Activated T-helper 2 cell treated with anti-CD3 and anti-CD28 coated beads, Interferon-gamma antibody, Interleukin-2, Interleukin-4, amounts not matched to agents 10 μg/mL and 5 μg/mL and 100 μg/mL, durations not matched to agents 14 hours and 24 hours and 36 hours (primary cell): ENCODE measurements at regions of chr16 and their contacts with region 1.

Region 1: GRCh38 chr16:25051406-25052150 is 36.4 kb upstream of the ARHGAP17 start:
- DNase-seq: no peak
- H3K4me3 Mint-ChIP-seq: peak overlapping the region; percentile 34
- H3K27ac Mint-ChIP-seq: peak overlapping the region; percentile 82
- H3K4me1 Mint-ChIP-seq: peaks cover 50% of the 10 kb centered on the region
- H3K27me3 Mint-ChIP-seq: no peaks in the 10 kb centered on the region

Region 2: GRCh38 chr16:25014500-25015147 is 37.0 kb before region 1 on chr16:
- intact Hi-C with region 1: loop called (anchors 2 kb)
- DNase-seq: no peak
- H3K4me3 Mint-ChIP-seq: peak overlapping the region; percentile 93
- H3K27ac Mint-ChIP-seq: peak overlapping the region; percentile 90
- H3K4me1 Mint-ChIP-seq: peaks cover 65% of the 10 kb centered on the region
- H3K27me3 Mint-ChIP-seq: no peaks in the 10 kb centered on the region

Region 3: GRCh38 chr16:25031441-25032307 is 19.9 kb before region 1 on chr16:
- intact Hi-C with region 1: loop called (anchors 1 kb)
- DNase-seq: peak; percentile 89
- H3K4me3 Mint-ChIP-seq: peak overlapping the region; percentile 92
- H3K27ac Mint-ChIP-seq: peak overlapping the region; percentile 99
- H3K4me1 Mint-ChIP-seq: peaks cover 30% of the 10 kb centered on the region
- H3K27me3 Mint-ChIP-seq: no peaks in the 10 kb centered on the region

Region 4: DNA sequence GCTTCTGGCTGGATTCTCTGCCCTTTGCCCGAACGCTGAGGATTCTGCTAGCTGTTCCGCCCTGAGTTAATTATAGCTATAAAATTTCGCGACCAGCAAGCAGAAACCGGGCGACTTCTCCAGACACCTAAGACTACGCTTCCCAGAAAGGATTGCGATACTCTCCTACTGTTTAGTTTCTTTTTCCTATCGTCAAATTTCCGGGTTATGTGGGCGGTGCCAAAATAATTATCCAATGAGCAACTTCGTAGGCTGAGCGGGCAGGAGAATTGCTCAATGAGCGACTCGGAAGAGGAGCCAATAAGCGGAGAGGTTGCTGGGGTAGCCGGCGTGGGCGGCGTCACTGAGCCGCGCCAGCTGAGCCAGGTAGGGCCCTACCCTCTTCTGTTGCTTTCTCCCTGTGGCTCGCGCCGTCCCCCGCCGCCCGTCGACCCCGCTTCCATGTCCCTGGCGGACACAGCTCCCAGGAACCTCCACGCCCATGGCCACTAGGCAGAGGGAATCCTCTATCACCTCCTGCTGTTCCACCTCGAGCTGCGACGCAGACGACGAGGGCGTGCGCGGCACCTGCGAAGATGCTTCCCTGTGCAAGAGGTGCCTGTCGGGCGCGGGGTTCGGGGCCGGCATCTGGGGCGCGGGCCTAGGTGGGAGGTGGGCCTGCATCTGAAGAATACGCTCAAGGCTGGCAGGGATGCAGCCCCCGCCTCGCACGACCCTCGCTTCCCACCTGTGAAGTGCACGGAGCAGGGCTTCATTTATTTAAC is 60.0 kb after region 1 on chr16 and contains the start of gene LCMT1:
- intact Hi-C with region 1: loop called (anchors 1 kb)
- DNase-seq: peak; percentile 91
- H3K4me3 Mint-ChIP-seq: peak within 1 kb of the TSS; percentile 95
- H3K27ac Mint-ChIP-seq: peak within 1 kb of the TSS; percentile 98
- H3K4me1 Mint-ChIP-seq: peaks cover 45% of the 10 kb centered on the region
- H3K27me3 Mint-ChIP-seq: no peaks in the 10 kb centered on the region
- total RNA-seq, gene LCMT1: 34.1 and 38.6 TPM in 2 replicates

Region 5: GRCh38 chr16:25126820-25127232 is 75.2 kb after region 1 on chr16:
- intact Hi-C with region 1: loop called (anchors 1 kb)
- DNase-seq: no peak
- H3K4me3 Mint-ChIP-seq: no peak overlapping the region
- H3K27ac Mint-ChIP-seq: peak overlapping the region; percentile 30
- H3K4me1 Mint-ChIP-seq: peaks cover 24% of the 10 kb centered on the region
- H3K27me3 Mint-ChIP-seq: no peaks in the 10 kb centered on the region

Region 6: DNA sequence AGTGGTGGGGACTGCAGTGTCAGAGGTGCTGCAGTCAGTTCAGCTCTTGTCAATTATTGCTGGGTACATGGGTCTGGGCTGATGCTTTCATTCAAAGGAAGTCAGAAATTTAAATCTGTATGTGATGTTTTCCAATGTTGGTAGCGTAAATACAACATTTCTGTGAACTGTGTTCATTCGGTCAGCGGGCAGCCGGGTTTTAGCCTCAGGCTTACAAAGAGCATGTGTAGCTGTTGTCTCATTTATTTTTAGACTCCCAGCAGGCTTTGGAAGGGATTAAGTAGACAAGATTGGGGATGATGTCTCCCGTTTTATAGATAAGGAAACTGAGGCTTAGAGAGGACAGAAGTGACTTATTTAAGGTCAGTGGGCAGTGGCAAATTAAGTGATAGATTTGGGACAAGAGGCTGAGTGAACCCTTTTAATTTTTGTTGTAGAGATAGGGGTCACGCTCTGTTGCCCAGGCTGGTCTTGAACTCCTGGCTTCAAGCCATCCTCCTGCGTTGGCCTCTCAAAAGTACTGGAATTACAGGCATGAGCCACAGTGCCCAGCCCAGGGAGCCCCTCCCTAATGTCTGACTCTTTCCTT is 173.2 kb after region 1 on chr16:
- intact Hi-C with region 1: loop called (anchors 1 kb)
- DNase-seq: no peak
- H3K4me3 Mint-ChIP-seq: no peak overlapping the region
- H3K27ac Mint-ChIP-seq: no peak overlapping the region
- H3K4me1 Mint-ChIP-seq: peaks cover 1% of the 10 kb centered on the region
- H3K27me3 Mint-ChIP-seq: no peaks in the 10 kb centered on the region

Region 7: GRCh38 chr16:25413985-25414384 is 362.4 kb after region 1 on chr16:
- intact Hi-C with region 1: no loop called
- DNase-seq: no peak
- H3K4me3 Mint-ChIP-seq: no peak overlapping the region
- H3K27ac Mint-ChIP-seq: no peak overlapping the region
- H3K4me1 Mint-ChIP-seq: no peaks in the 10 kb centered on the region
- H3K27me3 Mint-ChIP-seq: no peaks in the 10 kb centered on the region